Heart right ventricle (tissue), 16 donors: ENCODE measurements at regions of chrX and their contacts with region 1.

Region 1: DNA sequence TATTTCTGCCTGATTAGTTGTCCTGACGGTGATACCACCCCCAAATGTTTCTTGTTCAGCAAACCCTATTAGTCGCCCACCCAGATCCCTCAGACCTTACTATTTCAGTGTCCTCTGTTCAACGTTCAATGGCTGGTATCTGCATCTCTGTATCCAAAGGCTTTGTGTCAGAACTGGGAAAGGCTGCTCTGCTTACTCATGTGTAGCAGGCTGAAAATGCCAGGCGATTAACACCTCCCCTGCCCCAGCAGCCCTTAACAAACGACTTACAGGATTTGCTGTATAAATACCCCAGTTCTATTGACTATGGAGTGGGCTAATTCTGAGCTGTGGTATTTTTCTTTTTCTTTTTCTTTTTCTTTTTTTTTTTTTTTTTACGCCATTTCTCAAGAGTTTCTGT is 415.0 kb downstream of the ZNF674 start:
- DNase-seq: no peak
- ATAC-seq: no peak
- H3K4me3 ChIP-seq: no peak overlapping the region
- H3K27ac ChIP-seq: no peak overlapping the region
- H3K4me1 ChIP-seq: no peaks in the 10 kb centered on the region
- H3K27me3 ChIP-seq: peaks cover 0 to 64% (median 0%) of the 10 kb centered on the region in 7 donors
- CTCF ChIP-seq: no peak

Region 2: GRCh38 chrX:45860450-45860849 is 269.8 kb before region 1 on chrX:
- intact Hi-C with region 1: no loop called
- DNase-seq: no peak
- ATAC-seq: no peak
- H3K4me3 ChIP-seq: no peak overlapping the region
- H3K27ac ChIP-seq: no peak overlapping the region
- H3K4me1 ChIP-seq: no peaks in the 10 kb centered on the region
- H3K27me3 ChIP-seq: peaks cover 0 to 66% (median 0%) of the 10 kb centered on the region in 7 donors
- CTCF ChIP-seq: no peak

Region 3: GRCh38 chrX:46198858-46199257 is 68.6 kb after region 1 on chrX:
- intact Hi-C with region 1: loop called in 1 of 10 experiments (anchors 10 kb)
- DNase-seq: no peak
- ATAC-seq: no peak
- H3K4me3 ChIP-seq: no peak overlapping the region
- H3K27ac ChIP-seq: no peak overlapping the region
- H3K4me1 ChIP-seq: no peaks in the 10 kb centered on the region
- H3K27me3 ChIP-seq: peaks cover 0 to 24% (median 0%) of the 10 kb centered on the region in 7 donors
- CTCF ChIP-seq: no peak